ENCODE measurements at regions of chr5 and their contacts with region 1.

Region 1: GRCh38 chr5:108730617-108731340 is 16.9 kb upstream of the FER start:
- DNase-seq: no peak
- H3K4me3 ChIP-seq: no peak overlapping the region
- CTCF ChIP-seq: no peak

Region 2: DNA sequence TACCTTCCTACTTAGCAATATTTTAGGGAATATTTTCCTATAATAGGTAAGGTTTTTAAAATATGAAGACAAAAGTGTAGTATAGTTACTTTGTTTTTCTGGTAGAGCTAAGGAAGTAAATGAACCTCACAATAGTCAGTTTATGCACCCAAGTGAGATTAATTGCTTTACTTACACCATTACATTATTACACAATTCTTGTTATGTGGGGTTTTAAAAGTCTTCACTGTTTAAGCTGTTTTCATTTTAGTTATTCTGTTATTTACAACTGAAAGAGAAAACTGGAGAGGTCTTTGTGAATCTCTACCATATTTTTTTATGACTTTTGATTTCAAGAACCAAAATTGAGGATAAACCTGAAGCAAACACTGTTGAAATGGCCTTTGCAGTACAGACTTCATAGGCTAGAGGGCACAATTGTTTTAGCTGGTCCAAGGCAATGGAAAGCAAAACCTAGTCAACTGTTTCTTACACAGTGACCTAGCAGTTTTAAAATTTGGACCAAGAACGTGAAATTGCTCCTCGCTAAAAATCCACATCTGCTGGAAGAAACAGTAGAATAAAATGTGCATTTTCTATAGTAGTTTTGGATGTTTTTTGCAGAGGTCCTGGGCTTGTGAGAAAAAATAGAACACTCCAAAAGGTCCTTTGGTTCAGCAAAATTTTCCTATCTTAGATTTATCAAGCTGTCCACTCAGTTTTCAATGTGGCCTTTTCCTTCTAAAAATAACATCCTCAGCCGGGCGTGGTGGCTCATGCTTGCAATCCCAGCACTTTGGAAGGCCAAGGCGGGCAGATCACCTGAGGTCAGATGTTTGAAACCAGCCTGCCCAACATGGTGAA is 49.5 kb before region 1 on chr5:
- in situ Hi-C with region 1: loop called (anchors 10 kb)
- DNase-seq: peak; percentile 62
- H3K4me3 ChIP-seq: no peak overlapping the region
- CTCF ChIP-seq: peak; percentile 90